B cell (primary cell): ENCODE measurements at regions of chr7 and their contacts with region 1.

Region 1: GRCh38 chr7:150356265-150356897 is 12.2 kb upstream of the REPIN1 start:
- DNase-seq: peak; percentile 75
- ATAC-seq: peak; percentile 56
- H3K4me3 ChIP-seq: no peak overlapping the region
- H3K4me3 Mint-ChIP-seq: no peak overlapping the region
- H3K27ac ChIP-seq: no peak overlapping the region
- H3K27ac Mint-ChIP-seq: no peak overlapping the region
- H3K4me1 ChIP-seq: peaks cover 11 to 19% of the 10 kb centered on the region in 2 donors
- H3K4me1 Mint-ChIP-seq: peaks cover 21% of the 10 kb centered on the region
- H3K27me3 ChIP-seq: no peaks in the 10 kb centered on the region
- H3K27me3 Mint-ChIP-seq: no peaks in the 10 kb centered on the region
- CTCF ChIP-seq: peak; percentile 89

Region 2: DNA sequence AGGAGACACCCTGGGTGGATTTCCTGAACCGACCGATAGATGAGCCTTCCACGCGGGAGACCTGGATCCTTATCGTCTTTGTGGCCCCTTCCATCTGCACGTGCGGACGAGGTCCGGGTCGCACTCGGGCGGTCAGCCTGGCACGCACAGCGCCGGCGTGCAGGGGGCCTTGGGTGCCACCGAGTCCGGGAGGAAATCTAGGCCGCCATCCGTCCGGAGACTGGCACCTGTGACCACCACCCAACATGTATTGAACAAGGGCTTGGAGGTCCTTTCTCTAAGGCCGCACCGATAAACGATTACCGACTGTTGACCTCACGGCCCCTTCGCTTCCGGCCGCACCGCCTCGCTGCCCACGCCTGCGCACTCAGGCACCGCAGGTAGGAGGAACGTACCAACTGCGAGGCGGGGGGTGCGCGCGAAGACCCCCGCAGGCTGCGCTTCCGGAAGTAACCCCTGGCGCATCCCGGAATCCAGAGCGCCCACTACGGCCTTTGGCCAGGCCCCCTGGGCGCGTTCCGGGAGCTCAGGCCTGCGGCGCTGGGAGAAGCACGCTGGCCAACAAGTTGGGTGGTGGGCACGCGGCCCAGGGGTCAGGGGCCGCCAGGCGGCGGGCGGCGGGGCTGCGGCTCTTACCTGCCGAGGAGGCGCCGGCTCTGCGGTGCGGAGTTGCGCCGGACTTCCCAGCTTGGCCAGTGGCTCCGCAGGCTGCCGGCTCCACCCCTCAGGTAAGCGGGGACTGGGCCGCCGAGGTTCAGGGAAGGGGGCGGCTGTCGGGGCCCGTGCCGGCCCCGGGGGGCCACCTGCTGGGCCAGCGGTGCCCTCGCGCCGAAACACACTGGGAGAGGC is 33.3 kb before region 1 on chr7 and contains the starts of genes ACTR3C and LRRC61:
- CTCF ChIA-PET with region 1: interaction called, 3 read pairs
- POLR2A ChIA-PET with region 1: no interaction called
- intact Hi-C with region 1: loop called (anchors 5 kb)
- DNase-seq: peak; percentile 79
- ATAC-seq: peak; percentile 78
- H3K4me3 ChIP-seq: peak within 1 kb of the TSS; percentile 75 to 94 (median 88)
- H3K4me3 Mint-ChIP-seq: peak within 1 kb of the TSS; percentile 99
- H3K27ac ChIP-seq: peak within 1 kb of the TSS; percentile 82 to 88
- H3K27ac Mint-ChIP-seq: peak within 1 kb of the TSS; percentile 98
- H3K4me1 ChIP-seq: peaks cover 11 to 34% of the 10 kb centered on the region in 2 donors
- H3K4me1 Mint-ChIP-seq: peaks cover 47% of the 10 kb centered on the region
- H3K27me3 ChIP-seq: no peaks in the 10 kb centered on the region
- H3K27me3 Mint-ChIP-seq: no peaks in the 10 kb centered on the region
- CTCF ChIP-seq: no peak
- total RNA-seq, gene ACTR3C: 20.7 TPM in 2 replicates
- total RNA-seq, gene LRRC61: 12.8 and 15.5 TPM in 2 replicates

Region 3: GRCh38 chr7:150368096-150368883 is 11.9 kb after region 1 on chr7 and contains the start of gene REPIN1:
- CTCF ChIA-PET with region 1: interaction called, 59 read pairs
- POLR2A ChIA-PET with region 1: interaction called, 7 read pairs
- intact Hi-C with region 1: loop called (anchors 1 kb)
- DNase-seq: peak; percentile 89
- ATAC-seq: peak; percentile 49
- H3K4me3 ChIP-seq: peak within 1 kb of the TSS; percentile 62 to 98 (median 82)
- H3K4me3 Mint-ChIP-seq: peak within 1 kb of the TSS; percentile 92
- H3K27ac ChIP-seq: peak within 1 kb of the TSS; percentile 98 to 99
- H3K27ac Mint-ChIP-seq: peak within 1 kb of the TSS; percentile 98
- H3K4me1 ChIP-seq: peaks cover 57 to 72% of the 10 kb centered on the region in 2 donors
- H3K4me1 Mint-ChIP-seq: peaks cover 69% of the 10 kb centered on the region
- H3K27me3 ChIP-seq: no peaks in the 10 kb centered on the region
- H3K27me3 Mint-ChIP-seq: no peaks in the 10 kb centered on the region
- CTCF ChIP-seq: no peak
- total RNA-seq, gene REPIN1: 190 and 193 TPM in 2 replicates

Region 4: DNA sequence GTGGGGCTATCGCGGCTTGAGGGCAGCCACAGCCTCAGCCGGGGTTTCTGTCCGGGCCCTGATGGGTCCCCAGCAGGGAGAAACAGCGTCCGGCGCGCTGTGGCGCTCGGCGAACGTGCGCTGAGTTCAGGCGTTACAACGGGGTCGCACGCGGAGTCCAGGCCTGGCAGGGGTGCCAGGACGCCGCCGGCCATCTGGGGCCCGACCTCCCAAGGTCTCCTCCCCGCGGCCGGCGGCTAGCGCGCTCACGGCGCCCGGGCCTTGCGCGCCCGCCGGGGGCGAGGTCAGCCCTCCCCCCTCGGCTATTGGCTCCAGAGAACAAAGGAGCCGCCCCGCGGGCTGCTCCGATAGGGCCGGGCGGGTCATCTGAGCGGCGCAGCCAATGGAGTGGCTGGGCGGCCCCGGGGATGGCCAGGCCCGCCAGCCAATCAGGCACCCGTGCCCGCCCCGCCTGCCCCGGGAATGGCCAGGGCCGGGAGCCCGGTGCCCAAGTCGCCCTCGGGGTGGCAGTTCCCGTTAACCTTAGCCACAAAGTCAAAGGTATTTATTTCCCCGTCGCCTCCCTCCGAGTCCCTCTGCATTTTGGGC is 22.6 kb after region 1 on chr7 and contains the start of gene ZNF775:
- CTCF ChIA-PET with region 1: interaction called, 10 read pairs
- POLR2A ChIA-PET with region 1: no interaction called
- intact Hi-C with region 1: loop called (anchors 1 kb)
- DNase-seq: peak; percentile 93
- ATAC-seq: peak; percentile 91
- H3K4me3 ChIP-seq: peak within 1 kb of the TSS; percentile 45 to 91 (median 77)
- H3K4me3 Mint-ChIP-seq: peak within 1 kb of the TSS; percentile 96
- H3K27ac ChIP-seq: peak within 1 kb of the TSS; percentile 84 to 85
- H3K27ac Mint-ChIP-seq: peak within 1 kb of the TSS; percentile 90
- H3K4me1 ChIP-seq: peaks cover 22 to 59% of the 10 kb centered on the region in 2 donors
- H3K4me1 Mint-ChIP-seq: peaks cover 71% of the 10 kb centered on the region
- H3K27me3 ChIP-seq: no peaks in the 10 kb centered on the region
- H3K27me3 Mint-ChIP-seq: no peaks in the 10 kb centered on the region
- CTCF ChIP-seq: peak; percentile 14
- total RNA-seq, gene ZNF775: 12.1 and 12.5 TPM in 2 replicates

Region 5: DNA sequence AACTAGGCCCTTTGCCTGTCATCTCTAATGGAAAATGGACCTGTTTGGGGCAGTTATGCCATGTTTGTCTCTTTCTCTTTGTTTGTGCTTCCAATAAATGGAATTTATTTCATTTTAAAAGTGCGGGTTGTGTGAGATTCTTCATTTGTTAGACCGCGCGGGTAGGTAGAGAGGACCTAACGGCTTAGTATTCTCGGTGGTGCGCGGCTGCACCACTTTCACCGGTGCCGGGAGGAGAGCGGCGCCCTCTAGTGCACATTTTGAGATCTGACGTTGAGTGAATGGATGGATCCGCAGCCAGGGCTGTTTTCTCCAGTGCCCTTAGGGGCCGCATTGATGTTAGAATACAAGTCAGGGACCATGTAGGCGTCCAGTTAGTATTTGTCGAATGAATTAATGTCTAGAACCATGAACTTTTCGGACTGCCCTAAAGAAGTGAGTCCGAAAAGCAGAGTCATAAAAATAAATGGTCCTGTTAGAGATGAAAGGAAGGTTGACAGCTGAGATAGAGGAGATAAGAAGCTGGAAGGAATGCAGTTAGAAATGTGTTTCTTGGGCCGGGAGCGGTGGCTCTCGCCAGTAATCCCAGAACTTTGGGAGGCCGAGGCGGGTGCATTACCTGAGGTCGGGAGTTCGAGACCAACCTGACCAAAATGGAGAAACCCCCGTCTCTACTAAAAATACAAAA is 64.8 kb after region 1 on chr7:
- CTCF ChIA-PET with region 1: interaction called, 71 read pairs
- POLR2A ChIA-PET with region 1: no interaction called
- intact Hi-C with region 1: loop called (anchors 1 kb)
- DNase-seq: peak; percentile 90
- ATAC-seq: peak; percentile 99
- H3K4me3 ChIP-seq: peak overlapping the region in 1 of 5 experiments; percentile 4
- H3K4me3 Mint-ChIP-seq: peak overlapping the region; percentile 7
- H3K27ac ChIP-seq: no peak overlapping the region
- H3K27ac Mint-ChIP-seq: peak overlapping the region; percentile 51
- H3K4me1 ChIP-seq: peaks cover 0 to 5% of the 10 kb centered on the region in 2 donors
- H3K4me1 Mint-ChIP-seq: peaks cover 5% of the 10 kb centered on the region
- H3K27me3 ChIP-seq: no peaks in the 10 kb centered on the region
- H3K27me3 Mint-ChIP-seq: peaks cover 4% of the 10 kb centered on the region
- CTCF ChIP-seq: peak; percentile 97

Region 6: GRCh38 chr7:150830937-150831336 is 474.6 kb after region 1 on chr7:
- CTCF ChIA-PET with region 1: no interaction called
- POLR2A ChIA-PET with region 1: no interaction called
- intact Hi-C with region 1: no loop called
- DNase-seq: no peak
- ATAC-seq: no peak
- H3K4me3 ChIP-seq: no peak overlapping the region
- H3K4me3 Mint-ChIP-seq: no peak overlapping the region
- H3K27ac ChIP-seq: no peak overlapping the region
- H3K27ac Mint-ChIP-seq: no peak overlapping the region
- H3K4me1 ChIP-seq: no peaks in the 10 kb centered on the region
- H3K4me1 Mint-ChIP-seq: no peaks in the 10 kb centered on the region
- H3K27me3 ChIP-seq: peaks cover 0 to 11% (median 5%) of the 10 kb centered on the region in 4 experiments
- H3K27me3 Mint-ChIP-seq: peaks cover 52% of the 10 kb centered on the region
- CTCF ChIP-seq: no peak

Region 7: GRCh38 chr7:151046603-151047504 is 690.5 kb after region 1 on chr7:
- CTCF ChIA-PET with region 1: no interaction called
- POLR2A ChIA-PET with region 1: no interaction called
- intact Hi-C with region 1: no loop called
- DNase-seq: no peak
- ATAC-seq: no peak
- H3K4me3 ChIP-seq: no peak overlapping the region
- H3K4me3 Mint-ChIP-seq: no peak overlapping the region
- H3K27ac ChIP-seq: no peak overlapping the region
- H3K27ac Mint-ChIP-seq: peak overlapping the region; percentile 4
- H3K4me1 ChIP-seq: no peaks in the 10 kb centered on the region
- H3K4me1 Mint-ChIP-seq: peaks cover 2% of the 10 kb centered on the region
- H3K27me3 ChIP-seq: peaks cover 0 to 8% (median 2%) of the 10 kb centered on the region in 4 experiments
- H3K27me3 Mint-ChIP-seq: no peaks in the 10 kb centered on the region
- CTCF ChIP-seq: no peak